CD8-positive, alpha-beta T cell (primary cell): ENCODE measurements at regions of chr5 and their contacts with region 1.

Region 1: DNA sequence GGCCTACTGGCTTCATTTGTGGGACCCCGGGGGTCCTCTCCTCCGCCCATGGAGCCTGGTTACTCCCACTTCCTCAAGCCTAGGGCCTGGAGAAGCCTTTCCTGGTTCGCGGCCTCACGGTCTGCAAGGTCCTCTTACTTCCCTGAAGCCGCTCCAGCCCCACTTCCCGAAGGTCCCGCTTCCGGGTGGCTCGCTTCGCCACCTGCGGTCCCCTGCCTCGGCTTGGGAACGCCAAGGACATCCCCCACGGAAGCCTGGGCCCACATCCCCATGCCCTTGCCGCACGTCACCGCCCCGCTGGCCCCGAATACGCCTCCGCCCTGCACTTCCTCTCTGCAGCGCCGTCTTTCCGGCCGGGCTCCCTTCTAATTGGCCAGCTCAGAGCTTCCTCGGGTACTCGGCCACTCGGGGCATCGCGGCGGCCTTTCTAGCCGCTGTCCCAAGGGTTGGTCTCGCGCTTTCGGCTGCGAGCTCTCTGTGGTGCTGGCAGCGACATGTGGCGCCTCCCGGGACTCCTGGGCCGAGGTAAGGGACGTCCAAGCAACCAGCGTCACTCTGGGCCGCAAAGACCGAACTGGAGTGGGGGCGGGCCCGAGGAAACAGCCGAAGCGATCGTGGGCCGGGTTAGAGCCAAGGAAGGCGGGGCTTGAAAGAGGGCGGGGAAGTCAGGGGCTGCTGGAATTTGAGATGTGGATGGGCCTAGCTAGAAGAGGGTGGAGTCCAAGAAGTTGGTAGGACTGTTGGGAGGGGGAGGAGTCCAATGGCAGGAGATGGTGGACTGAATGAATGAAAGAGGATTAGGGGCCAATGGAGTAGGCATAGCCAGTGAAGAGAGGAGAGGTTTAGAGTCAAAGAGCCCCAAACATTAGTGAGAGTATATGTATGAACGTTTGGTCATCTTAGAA is at the start of gene DELE1:
- DNase-seq: peak; percentile 77 to 95 (median 91)
- ATAC-seq: peak; percentile 93
- H3K4me3 ChIP-seq: peak within 1 kb of the TSS; percentile 65 to 88
- H3K4me3 Mint-ChIP-seq: peak within 1 kb of the TSS; percentile 95
- H3K27ac ChIP-seq: peak within 1 kb of the TSS; percentile 98
- H3K27ac Mint-ChIP-seq: peak within 1 kb of the TSS; percentile 98
- H3K4me1 ChIP-seq: peaks cover 16% of the 10 kb centered on the region
- H3K4me1 Mint-ChIP-seq: peaks cover 40% of the 10 kb centered on the region
- H3K27me3 ChIP-seq: no peaks in the 10 kb centered on the region
- H3K27me3 Mint-ChIP-seq: no peaks in the 10 kb centered on the region
- CTCF ChIP-seq: no peak
- total RNA-seq, gene DELE1: 61.7 to 65.0 TPM

Region 2: GRCh38 chr5:141650851-141651727 is 272.6 kb before region 1 on chr5 and contains the start of gene FCHSD1:
- CTCF ChIA-PET with region 1: no interaction called
- POLR2A ChIA-PET with region 1: interaction called, 4 read pairs
- intact Hi-C with region 1: loop called (anchors 2 to 5 kb)
- DNase-seq: peak; percentile 70 to 89 (median 81)
- ATAC-seq: peak; percentile 92
- H3K4me3 ChIP-seq: peak within 1 kb of the TSS; percentile 64
- H3K4me3 Mint-ChIP-seq: peak within 1 kb of the TSS; percentile 89
- H3K27ac ChIP-seq: peak within 1 kb of the TSS; percentile 63 to 73
- H3K27ac Mint-ChIP-seq: peak within 1 kb of the TSS; percentile 87
- H3K4me1 ChIP-seq: peaks cover 20% of the 10 kb centered on the region
- H3K4me1 Mint-ChIP-seq: peaks cover 52% of the 10 kb centered on the region
- H3K27me3 ChIP-seq: no peaks in the 10 kb centered on the region
- H3K27me3 Mint-ChIP-seq: no peaks in the 10 kb centered on the region
- CTCF ChIP-seq: no peak
- total RNA-seq, gene FCHSD1: 95.8 to 101 TPM

Region 3: GRCh38 chr5:141849375-141850243 is 74.1 kb before region 1 on chr5:
- CTCF ChIA-PET with region 1: no interaction called
- POLR2A ChIA-PET with region 1: no interaction called
- intact Hi-C with region 1: loop called (anchors 5 kb)
- DNase-seq: peak; percentile 42 to 83 (median 70)
- ATAC-seq: peak; percentile 79
- H3K4me3 ChIP-seq: peak overlapping the region; percentile 77 to 84
- H3K4me3 Mint-ChIP-seq: peak overlapping the region; percentile 87
- H3K27ac ChIP-seq: peak overlapping the region; percentile 73
- H3K27ac Mint-ChIP-seq: peak overlapping the region; percentile 82
- H3K4me1 ChIP-seq: peaks cover 7% of the 10 kb centered on the region
- H3K4me1 Mint-ChIP-seq: peaks cover 10% of the 10 kb centered on the region
- H3K27me3 ChIP-seq: no peaks in the 10 kb centered on the region
- H3K27me3 Mint-ChIP-seq: peaks cover 2% of the 10 kb centered on the region
- CTCF ChIP-seq: no peak

Region 4: DNA sequence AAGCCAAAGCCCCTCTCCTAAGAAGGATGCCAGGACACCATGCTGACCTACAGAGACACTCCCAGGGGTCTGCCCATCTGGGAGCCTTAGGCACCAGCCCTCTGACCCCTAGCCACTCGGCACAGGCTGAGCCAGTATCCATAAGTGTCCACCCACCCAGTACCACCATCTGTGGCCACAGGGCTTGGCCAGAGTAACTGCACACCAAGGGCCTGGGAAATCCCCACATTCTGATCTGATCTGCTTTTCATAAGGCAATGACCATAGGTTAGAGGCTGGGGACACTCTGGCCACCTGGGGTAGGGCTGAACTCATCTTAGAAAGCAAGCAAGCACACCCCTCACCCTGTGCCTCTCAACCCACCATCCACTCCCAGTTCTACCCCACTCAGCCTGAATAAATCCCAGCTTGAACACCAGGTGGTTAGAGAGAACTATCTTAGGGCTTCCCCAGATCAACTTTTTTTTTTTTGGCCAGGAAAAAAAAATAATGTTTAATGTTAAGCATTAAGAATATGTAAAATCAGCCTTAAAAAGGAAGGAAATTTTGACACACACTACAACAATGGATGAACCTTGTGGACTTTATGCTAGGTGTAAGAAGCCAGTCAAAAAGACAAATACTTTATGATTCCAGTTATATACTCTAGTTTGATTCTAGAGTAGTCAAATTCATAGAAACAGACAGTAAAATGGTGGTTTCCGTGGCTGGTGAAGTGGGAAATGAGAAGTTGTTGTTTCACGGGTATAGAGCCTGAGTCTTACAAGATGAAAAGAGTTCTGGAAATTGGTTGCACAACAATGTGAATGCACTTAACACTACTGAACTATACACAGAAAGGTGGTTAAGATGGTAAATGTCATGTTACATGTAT is 82.9 kb after region 1 on chr5:
- CTCF ChIA-PET with region 1: no interaction called
- POLR2A ChIA-PET with region 1: no interaction called
- intact Hi-C with region 1: no loop called
- DNase-seq: peak in 2 of 9 experiments; percentile 46 to 74
- ATAC-seq: peak; percentile 83
- H3K4me3 ChIP-seq: no peak overlapping the region
- H3K4me3 Mint-ChIP-seq: peak overlapping the region; percentile 2
- H3K27ac ChIP-seq: peak overlapping the region; percentile 17 to 42
- H3K27ac Mint-ChIP-seq: peak overlapping the region; percentile 88
- H3K4me1 ChIP-seq: peaks cover 41% of the 10 kb centered on the region
- H3K4me1 Mint-ChIP-seq: peaks cover 52% of the 10 kb centered on the region
- H3K27me3 ChIP-seq: no peaks in the 10 kb centered on the region
- H3K27me3 Mint-ChIP-seq: no peaks in the 10 kb centered on the region
- CTCF ChIP-seq: no peak

Region 5: DNA sequence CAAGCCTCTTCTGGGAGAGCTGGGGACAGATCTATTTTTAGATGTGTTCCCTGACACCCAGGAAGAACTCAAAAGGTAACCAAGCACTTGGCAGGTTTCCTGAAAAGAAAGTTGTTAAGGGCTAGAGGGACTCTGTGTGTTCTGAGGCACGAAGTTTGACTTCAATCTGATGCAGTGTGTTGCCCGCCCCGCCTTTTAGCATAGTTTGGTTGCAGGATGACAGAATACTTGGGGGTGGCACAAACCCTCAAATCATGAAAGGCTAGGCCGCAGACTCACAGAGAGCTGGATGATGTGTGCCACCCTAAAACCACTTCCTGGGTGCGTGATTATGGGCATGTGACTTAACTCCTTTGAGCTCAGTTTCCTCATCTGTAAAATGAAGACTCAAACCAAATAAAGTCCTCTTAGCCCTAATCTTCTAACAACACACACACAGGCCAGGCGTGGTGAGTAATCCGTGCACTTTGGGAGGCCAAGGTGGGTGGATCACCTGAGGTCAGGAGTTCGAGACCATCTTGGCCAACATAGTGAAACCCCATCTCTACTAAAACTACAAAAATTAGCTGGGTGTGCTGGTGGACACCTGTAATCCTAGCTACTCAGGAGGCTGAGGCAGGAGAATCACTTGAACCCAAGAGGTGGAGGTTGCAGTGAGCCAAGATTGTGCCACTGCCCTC is 172.1 kb after region 1 on chr5:
- CTCF ChIA-PET with region 1: no interaction called
- POLR2A ChIA-PET with region 1: no interaction called
- intact Hi-C with region 1: loop called in 1 of 2 experiments (anchors 2 kb)
- DNase-seq: peak; percentile 68 to 95 (median 80)
- ATAC-seq: peak; percentile 87
- H3K4me3 ChIP-seq: no peak overlapping the region
- H3K4me3 Mint-ChIP-seq: peak overlapping the region; percentile 56
- H3K27ac ChIP-seq: peak overlapping the region; percentile 62 to 78
- H3K27ac Mint-ChIP-seq: peak overlapping the region; percentile 95
- H3K4me1 ChIP-seq: peaks cover 61% of the 10 kb centered on the region
- H3K4me1 Mint-ChIP-seq: peaks cover 57% of the 10 kb centered on the region
- H3K27me3 ChIP-seq: no peaks in the 10 kb centered on the region
- H3K27me3 Mint-ChIP-seq: no peaks in the 10 kb centered on the region
- CTCF ChIP-seq: no peak